HCT116 (cell line): ENCODE measurements at regions of chr14 and their contacts with region 1.

Region 1: DNA sequence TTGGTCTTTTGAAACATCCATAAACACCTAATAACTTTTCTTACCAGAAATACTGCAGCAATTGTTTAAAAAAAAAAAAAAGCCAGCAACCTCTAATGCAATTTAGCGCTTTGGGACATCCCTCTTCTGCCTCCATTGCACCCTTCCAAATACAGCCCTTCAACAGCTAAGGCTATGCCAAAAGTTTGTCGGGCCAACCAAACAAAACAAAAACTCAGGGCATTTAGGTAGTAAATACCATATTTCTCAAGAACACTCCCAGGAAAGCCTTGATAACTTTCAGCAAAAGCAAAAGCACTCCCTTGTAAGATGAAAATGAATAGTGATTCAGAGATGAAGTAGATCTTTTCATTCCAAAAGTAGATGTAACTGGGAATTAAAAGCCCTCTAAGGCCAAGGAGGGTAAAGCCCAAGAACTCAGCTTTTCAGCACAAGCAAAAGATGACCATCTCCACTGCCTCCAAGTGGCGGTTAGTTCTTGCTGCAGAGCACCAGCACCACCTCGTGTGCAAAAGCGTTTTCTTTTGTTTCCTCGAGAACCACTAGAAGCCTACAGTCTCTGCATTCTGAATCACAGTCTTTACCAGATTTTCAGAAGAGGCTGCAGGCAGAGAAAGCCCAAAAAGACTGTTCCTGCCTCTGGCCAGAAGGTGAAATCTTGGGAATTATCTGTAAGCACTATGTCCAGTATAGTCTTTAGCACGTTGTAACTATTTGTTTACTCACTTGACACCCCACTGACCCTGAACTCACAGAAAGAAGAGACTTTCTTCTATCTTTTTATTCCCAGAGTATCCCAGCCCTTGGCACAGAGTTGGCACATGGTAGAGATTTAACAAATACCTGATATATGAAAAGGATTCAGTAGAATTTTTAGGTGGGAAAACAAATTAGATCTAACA is 53.1 kb downstream of the SIX6 start:
- DNase-seq: peak; percentile 81
- ATAC-seq: peak; percentile 97
- H3K4me3 ChIP-seq: no peak overlapping the region
- H3K27ac ChIP-seq: no peak overlapping the region
- H3K4me1 ChIP-seq: peaks cover 0 to 4% of the 10 kb centered on the region in 2 experiments; a peak in 1 of 4 replicates
- H3K27me3 ChIP-seq: no peaks in the 10 kb centered on the region
- CTCF ChIP-seq: peak; percentile 80 to 96 (median 89)
- POLR2A ChIP-seq: no peak
- RAD21 ChIP-seq: peak; percentile 91

Region 2: DNA sequence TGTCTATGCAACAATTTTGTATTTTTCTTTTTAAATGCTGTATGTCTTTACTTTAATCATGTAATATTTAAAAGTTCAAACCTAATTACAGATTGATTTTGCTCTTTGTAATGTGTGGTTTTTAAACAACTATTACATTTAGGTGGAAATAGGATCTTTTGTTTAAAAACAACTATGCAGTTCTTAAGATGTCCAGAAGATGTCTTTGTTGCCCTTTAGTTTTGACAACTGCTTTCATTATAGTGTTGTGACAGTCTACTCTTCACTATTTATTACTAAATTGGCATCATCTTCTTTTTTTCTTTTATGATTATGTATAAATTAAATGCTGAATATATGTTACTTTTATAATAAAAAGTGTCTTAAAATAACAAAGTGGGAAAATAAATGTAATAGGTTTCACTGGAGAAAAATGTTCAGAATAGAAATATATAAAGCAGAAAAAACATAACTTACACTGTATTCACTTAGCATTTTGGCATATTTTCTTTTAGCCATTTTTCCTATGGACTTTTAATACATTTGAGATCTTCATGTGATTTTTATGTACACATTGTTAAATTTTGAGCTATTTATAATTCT is 497.5 kb before region 1 on chr14:
- CTCF ChIA-PET with region 1: interaction called, 3 read pairs
- POLR2A ChIA-PET with region 1: no interaction called
- RAD21 ChIA-PET with region 1: no interaction called
- intact Hi-C with region 1: loop called (anchors 5 kb)
- DNase-seq: peak; percentile 12
- ATAC-seq: no peak; the same call in 1 of the 2 replicates
- H3K4me3 ChIP-seq: no peak overlapping the region
- H3K27ac ChIP-seq: no peak overlapping the region
- H3K4me1 ChIP-seq: peaks cover 4 to 10% of the 10 kb centered on the region in 2 experiments; a peak in 2 of 4 replicates
- H3K27me3 ChIP-seq: no peaks in the 10 kb centered on the region
- CTCF ChIP-seq: peak; percentile 27 to 67 (median 46); a peak in 4 of 6 replicates
- POLR2A ChIP-seq: no peak
- RAD21 ChIP-seq: peak; percentile 74

Region 3: DNA sequence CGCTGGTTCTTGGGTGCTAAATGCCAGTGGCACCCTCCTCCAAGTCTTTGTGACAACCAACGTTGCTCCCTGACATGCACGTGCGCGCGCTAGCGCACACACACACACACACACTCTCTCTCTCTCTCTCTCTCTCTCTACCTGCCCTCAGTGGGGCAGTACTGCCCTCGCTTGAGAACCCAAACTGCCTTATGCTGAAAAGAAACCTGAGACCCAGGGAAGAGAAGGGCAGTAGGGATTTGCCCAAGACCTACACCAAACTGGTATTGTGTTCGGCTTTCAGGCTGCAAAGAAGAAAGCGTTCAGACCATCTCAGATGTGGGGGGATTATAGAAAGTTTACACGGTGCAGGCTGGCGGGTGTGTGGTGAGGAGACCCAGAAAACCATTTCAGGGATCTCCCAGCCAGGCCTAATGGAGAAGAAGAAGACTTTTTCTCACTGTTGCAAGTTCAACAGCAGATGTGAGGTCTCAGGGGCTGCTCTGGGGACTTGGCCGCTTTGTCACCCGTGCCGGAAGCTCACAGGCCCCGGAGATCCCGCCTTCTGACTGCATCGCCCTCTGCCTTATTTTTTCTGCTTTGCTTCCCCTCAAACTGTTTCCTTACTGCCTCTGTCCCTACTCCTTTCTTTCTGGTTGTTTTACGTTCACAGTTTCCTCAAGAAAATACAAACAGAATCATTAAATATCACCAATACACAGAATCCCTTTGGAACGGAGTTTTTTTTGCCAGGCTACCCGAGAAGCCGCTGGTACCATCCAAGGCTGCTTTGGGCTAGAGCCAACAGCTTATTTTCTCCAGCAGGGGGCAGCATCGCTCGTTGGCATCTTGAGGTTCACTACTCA is 230.7 kb before region 1 on chr14:
- CTCF ChIA-PET with region 1: interaction called, 17 read pairs
- POLR2A ChIA-PET with region 1: interaction called, 3 read pairs
- RAD21 ChIA-PET with region 1: interaction called, 4 read pairs
- intact Hi-C with region 1: loop called (anchors 1 kb)
- DNase-seq: peak; percentile 67
- ATAC-seq: peak; percentile 86
- H3K4me3 ChIP-seq: peak overlapping the region; percentile 47 to 55
- H3K27ac ChIP-seq: peak overlapping the region; percentile 56
- H3K4me1 ChIP-seq: peaks cover 3 to 11% of the 10 kb centered on the region in 2 experiments; a peak in 2 of 4 replicates
- H3K27me3 ChIP-seq: no peaks in the 10 kb centered on the region
- CTCF ChIP-seq: peak; percentile 69 to 91 (median 80); a peak in 5 of 6 replicates
- POLR2A ChIP-seq: no peak
- RAD21 ChIP-seq: peak; percentile 63

Region 4: DNA sequence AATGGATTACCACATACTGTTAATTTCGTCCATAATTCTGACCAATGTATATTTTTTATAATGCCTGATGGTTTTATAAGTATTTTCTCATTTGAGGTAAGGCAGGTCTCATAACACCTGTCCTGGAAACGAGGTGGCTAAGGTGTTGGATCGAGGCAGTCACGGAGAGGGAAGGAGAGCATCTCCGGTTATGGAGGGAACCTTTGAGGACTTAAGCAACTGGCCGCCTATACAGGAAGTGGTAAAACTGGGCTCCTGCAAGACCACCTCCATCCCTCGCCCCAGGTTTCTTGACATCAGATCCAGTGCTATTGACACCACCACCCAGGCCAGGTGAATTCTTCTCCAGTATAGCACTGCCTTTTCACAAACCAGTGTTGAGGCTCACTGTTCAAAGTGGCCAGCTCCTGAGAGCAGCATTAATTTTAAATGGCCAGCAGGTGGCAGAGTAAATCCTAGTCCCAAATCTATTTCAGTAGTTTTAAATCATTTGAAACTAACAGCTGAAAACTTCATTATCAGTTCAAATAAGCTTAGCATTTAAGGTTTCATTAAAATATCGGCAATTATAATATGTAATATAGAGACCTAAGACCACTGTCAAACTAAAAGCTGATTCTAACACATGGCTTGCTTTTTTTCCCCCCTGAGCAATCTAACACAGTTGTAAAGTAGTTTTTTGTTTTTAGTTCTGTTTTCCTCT is 212.3 kb before region 1 on chr14:
- CTCF ChIA-PET with region 1: interaction called, 48 read pairs
- POLR2A ChIA-PET with region 1: interaction called, 4 read pairs
- RAD21 ChIA-PET with region 1: no interaction called
- intact Hi-C with region 1: loop called (anchors 1 kb)
- DNase-seq: peak; percentile 39
- ATAC-seq: peak; percentile 90
- H3K4me3 ChIP-seq: no peak overlapping the region
- H3K27ac ChIP-seq: no peak overlapping the region
- H3K4me1 ChIP-seq: no peaks in the 10 kb centered on the region
- H3K27me3 ChIP-seq: no peaks in the 10 kb centered on the region
- CTCF ChIP-seq: peak; percentile 57 to 78 (median 64)
- POLR2A ChIP-seq: no peak
- RAD21 ChIP-seq: peak; percentile 65

Region 5: GRCh38 chr14:60573943-60574495 is 11.9 kb after region 1 on chr14:
- CTCF ChIA-PET with region 1: no interaction called
- POLR2A ChIA-PET with region 1: no interaction called
- RAD21 ChIA-PET with region 1: no interaction called
- intact Hi-C with region 1: no loop called
- DNase-seq: no peak
- ATAC-seq: no peak
- H3K4me3 ChIP-seq: no peak overlapping the region
- H3K27ac ChIP-seq: no peak overlapping the region
- H3K4me1 ChIP-seq: no peaks in the 10 kb centered on the region
- H3K27me3 ChIP-seq: no peaks in the 10 kb centered on the region
- CTCF ChIP-seq: no peak
- POLR2A ChIP-seq: no peak
- RAD21 ChIP-seq: no peak